AG04450 (cell line): ENCODE measurements at regions of chr2 and their contacts with region 1.

Region 1: GRCh38 chr2:80073134-80073561 is 231.4 kb downstream of the LRRTM1 start:
- DNase-seq: peak; percentile 43
- H3K4me3 ChIP-seq: no peak overlapping the region
- H3K27ac ChIP-seq: no peak overlapping the region
- H3K27me3 ChIP-seq: no peaks in the 10 kb centered on the region
- CTCF ChIP-seq: peak; percentile 79

Region 2: DNA sequence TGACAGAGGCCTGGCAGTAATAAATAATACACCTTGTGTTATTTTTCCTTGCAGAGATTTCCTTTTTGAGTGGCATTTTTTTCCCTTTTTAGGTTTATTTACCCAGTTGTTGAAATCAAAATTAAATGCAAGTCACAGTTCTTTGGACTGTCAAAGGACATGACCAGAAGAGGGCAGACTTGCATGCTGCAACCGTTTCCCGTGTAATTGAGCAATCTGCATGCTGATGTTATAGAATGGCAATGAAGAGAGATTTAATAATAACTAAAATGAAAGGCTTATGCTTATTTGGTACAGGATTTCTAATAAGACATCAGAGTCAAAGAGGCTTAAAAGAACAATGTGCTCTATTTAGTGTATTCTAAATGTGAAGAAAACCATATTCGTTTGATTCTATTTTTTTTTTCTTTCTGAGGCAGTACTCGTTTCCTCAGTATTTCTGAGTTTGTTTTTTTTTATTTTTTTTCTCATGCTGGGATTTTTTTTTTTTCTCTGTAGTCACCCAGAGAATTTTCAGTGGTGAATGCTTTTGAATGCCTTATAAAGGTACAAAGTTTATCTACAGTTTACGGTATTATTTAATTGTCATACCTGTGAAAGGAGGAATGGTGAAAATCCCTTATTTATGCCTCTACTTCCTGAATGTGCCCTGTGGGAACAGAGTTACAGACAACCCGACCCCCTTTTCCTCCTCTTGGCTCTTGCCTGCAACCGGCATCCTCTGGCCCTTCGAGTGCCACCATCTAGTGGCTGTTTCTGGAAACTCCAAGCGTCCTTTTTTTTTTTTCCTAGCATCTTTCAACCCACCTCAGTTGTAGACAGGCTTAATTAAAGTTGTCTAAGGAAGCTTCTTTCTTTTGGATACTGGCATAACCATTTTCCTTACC is 137.1 kb before region 1 on chr2:
- CTCF ChIA-PET with region 1: interaction called, 14 read pairs
- POLR2A ChIA-PET with region 1: no interaction called
- DNase-seq: peak; percentile 44
- H3K4me3 ChIP-seq: no peak overlapping the region
- H3K27ac ChIP-seq: no peak overlapping the region
- H3K27me3 ChIP-seq: no peaks in the 10 kb centered on the region
- CTCF ChIP-seq: peak; percentile 84

Region 3: DNA sequence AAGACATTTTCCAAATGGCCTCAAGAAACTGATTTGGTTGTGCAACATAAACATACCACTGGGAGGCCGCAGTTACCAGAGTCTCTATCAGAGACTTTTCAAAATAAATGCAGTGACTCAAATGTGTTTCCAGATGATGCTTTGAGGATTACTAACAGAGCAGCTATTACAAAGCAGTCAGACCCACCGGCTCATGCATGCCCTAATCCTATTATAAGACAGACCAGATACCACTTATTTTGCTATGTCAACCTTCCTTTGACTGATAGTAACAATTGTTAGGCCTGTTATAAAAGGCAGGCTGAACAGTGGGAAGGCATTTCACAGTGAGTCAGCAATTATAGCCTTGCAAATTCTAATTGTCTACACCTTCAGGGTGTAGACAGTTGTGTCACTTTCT is 13.7 kb after region 1 on chr2:
- CTCF ChIA-PET with region 1: interaction called, 24 read pairs
- POLR2A ChIA-PET with region 1: no interaction called
- DNase-seq: peak; percentile 77
- H3K4me3 ChIP-seq: no peak overlapping the region
- H3K27ac ChIP-seq: no peak overlapping the region
- H3K27me3 ChIP-seq: no peaks in the 10 kb centered on the region
- CTCF ChIP-seq: peak; percentile 56

Region 4: DNA sequence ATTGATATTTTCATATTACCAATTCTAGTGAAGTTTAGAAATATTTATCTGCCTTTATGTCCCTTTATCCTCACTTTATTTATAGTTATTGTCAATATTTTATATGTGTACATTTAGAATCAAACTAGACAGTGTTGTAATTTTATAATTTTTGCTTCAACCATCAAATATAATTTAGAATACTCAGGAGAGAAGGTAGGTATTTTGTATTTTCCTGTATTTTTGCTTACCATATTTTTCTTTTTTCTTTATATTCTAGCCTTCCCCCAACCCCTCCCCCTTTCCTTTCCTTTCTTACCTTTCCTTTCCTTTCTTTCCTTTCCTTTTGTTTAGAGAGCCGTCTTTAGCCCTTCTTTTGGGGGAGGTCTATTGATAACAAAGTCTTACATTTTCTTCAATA is 91.2 kb after region 1 on chr2:
- CTCF ChIA-PET with region 1: no interaction called
- POLR2A ChIA-PET with region 1: no interaction called
- DNase-seq: no peak
- H3K4me3 ChIP-seq: no peak overlapping the region
- H3K27ac ChIP-seq: no peak overlapping the region
- H3K27me3 ChIP-seq: no peaks in the 10 kb centered on the region
- CTCF ChIP-seq: no peak